Endothelial cell of umbilical vein (primary cell): ENCODE measurements at regions of chr12 and their contacts with region 1.

Region 1: GRCh38 chr12:52171950-52172512 is 19.8 kb downstream of the KRT80 start:
- DNase-seq: no peak
- H3K4me3 ChIP-seq: no peak overlapping the region
- H3K27ac ChIP-seq: no peak overlapping the region
- H3K4me1 ChIP-seq: peaks cover 15% of the 10 kb centered on the region
- H3K27me3 ChIP-seq: no peaks in the 10 kb centered on the region
- CTCF ChIP-seq: peak; percentile 19 to 40
- POLR2A ChIP-seq: no peak

Region 2: GRCh38 chr12:52097045-52097666 is 74.9 kb before region 1 on chr12:
- CTCF ChIA-PET with region 1: no interaction called
- POLR2A ChIA-PET with region 1: no interaction called
- dilution Hi-C with region 1: no loop called
- intact Hi-C with region 1: loop called (anchors 2 kb)
- DNase-seq: no peak
- H3K4me3 ChIP-seq: no peak overlapping the region
- H3K27ac ChIP-seq: no peak overlapping the region
- H3K4me1 ChIP-seq: no peaks in the 10 kb centered on the region
- H3K27me3 ChIP-seq: peaks cover 0 to 3% of the 10 kb centered on the region in 2 experiments
- CTCF ChIP-seq: no peak
- POLR2A ChIP-seq: no peak

Region 3: DNA sequence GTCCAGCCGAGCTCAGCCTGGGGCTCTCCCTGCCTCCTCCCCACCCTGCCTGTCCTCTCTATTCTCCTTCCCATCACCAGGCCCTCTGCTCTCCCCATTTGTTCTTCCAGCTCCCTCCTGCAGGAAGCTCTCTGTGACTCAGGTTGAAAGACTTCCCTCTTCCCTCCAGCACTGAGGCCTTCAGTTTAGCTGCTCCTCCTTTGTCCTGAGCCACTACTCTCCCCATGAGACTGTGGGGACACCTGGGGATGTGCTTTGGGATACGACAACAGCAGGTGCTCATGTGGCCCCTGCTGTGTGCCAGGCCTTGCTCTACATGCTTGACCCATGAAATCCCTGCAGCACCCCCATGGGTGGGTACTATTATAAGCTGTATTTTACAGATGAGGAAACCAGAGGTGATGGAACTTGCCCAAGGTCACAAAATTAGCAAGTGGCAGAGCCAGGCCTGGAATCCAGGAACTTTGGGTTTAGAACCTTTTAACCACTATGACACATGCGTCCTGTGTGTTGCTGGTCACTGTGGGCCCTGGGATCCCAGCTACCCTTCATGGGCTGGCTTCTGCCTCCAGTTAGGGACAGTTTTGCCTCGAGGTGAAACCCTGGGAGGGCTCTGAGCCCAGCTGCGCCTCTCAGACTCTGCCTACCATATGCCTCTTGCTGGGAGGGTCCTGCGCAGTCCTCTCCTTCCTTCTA is 14.3 kb after region 1 on chr12:
- CTCF ChIA-PET with region 1: interaction called, 34 read pairs
- POLR2A ChIA-PET with region 1: interaction called, 5 read pairs
- dilution Hi-C with region 1: no loop called
- intact Hi-C with region 1: no loop called
- DNase-seq: peak; percentile 72
- H3K4me3 ChIP-seq: no peak overlapping the region
- H3K27ac ChIP-seq: peak overlapping the region; percentile 79
- H3K4me1 ChIP-seq: peaks cover 67% of the 10 kb centered on the region
- H3K27me3 ChIP-seq: no peaks in the 10 kb centered on the region
- CTCF ChIP-seq: no peak
- POLR2A ChIP-seq: no peak

Region 4: DNA sequence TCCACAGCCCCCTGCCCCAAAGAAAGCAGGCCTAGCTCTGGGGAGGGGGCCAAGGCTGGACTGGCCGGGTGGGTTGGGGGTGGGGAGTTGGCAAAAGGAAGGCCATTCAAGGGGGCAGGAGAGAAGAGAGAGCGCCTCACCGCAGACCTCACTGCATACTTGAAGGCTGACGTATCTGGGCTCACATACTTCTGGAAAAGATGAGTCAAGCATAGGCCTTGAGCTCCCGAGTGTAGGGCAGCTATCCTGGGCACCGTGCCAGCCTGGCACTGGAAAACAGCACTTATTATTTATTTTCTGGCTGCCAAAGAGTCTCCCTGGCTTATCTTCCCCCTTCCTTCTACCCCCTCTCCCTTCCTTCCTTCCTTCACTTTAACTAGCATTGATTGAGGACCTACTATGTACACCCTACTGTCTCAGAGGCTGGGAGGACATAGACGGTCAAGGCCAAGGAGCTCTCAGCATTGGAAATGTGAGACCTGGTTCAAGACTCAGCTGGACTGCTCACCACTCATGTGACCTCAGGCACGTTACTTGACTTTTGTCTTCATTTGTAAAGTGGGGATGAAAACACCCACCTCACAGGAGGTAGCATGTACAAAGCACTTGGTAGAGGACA is 20.3 kb after region 1 on chr12:
- CTCF ChIA-PET with region 1: interaction called, 34 read pairs
- POLR2A ChIA-PET with region 1: interaction called, 3 read pairs
- dilution Hi-C with region 1: no loop called
- intact Hi-C with region 1: loop called (anchors 1 kb)
- DNase-seq: peak; percentile 98
- H3K4me3 ChIP-seq: no peak overlapping the region
- H3K27ac ChIP-seq: peak overlapping the region; percentile 87
- H3K4me1 ChIP-seq: peaks cover 57% of the 10 kb centered on the region
- H3K27me3 ChIP-seq: no peaks in the 10 kb centered on the region
- CTCF ChIP-seq: no peak
- POLR2A ChIP-seq: peak; percentile 69

Region 5: GRCh38 chr12:52207895-52208294 is 35.9 kb after region 1 on chr12:
- CTCF ChIA-PET with region 1: interaction called, 39 read pairs
- POLR2A ChIA-PET with region 1: no interaction called
- dilution Hi-C with region 1: no loop called
- intact Hi-C with region 1: loop called (anchors 1 kb)
- DNase-seq: peak; percentile 22
- H3K4me3 ChIP-seq: no peak overlapping the region
- H3K27ac ChIP-seq: no peak overlapping the region
- H3K4me1 ChIP-seq: peaks cover 5% of the 10 kb centered on the region
- H3K27me3 ChIP-seq: no peaks in the 10 kb centered on the region
- CTCF ChIP-seq: no peak
- POLR2A ChIP-seq: no peak